ENCODE measurements at regions of chr11 and their contacts with region 1.

Region 1: GRCh38 chr11:61384271-61385242 is 7.8 kb upstream of the TMEM216 start:
- DNase-seq: no peak
- H3K4me3 ChIP-seq: no peak overlapping the region
- H3K4me1 ChIP-seq: no peaks in the 10 kb centered on the region
- H3K27me3 ChIP-seq: no peaks in the 10 kb centered on the region

Region 2: GRCh38 chr11:61152816-61153592 is 231.6 kb before region 1 on chr11:
- in situ Hi-C with region 1: no loop called
- DNase-seq: no peak
- H3K4me3 ChIP-seq: no peak overlapping the region
- H3K4me1 ChIP-seq: peaks cover 11% of the 10 kb centered on the region
- H3K27me3 ChIP-seq: no peaks in the 10 kb centered on the region

Region 3: GRCh38 chr11:61336171-61336922 is 48.2 kb before region 1 on chr11:
- in situ Hi-C with region 1: loop called (anchors 5 kb)
- DNase-seq: peak; percentile 66 to 87
- H3K4me3 ChIP-seq: no peak overlapping the region
- H3K4me1 ChIP-seq: peaks cover 33% of the 10 kb centered on the region
- H3K27me3 ChIP-seq: no peaks in the 10 kb centered on the region